Mammary epithelial cell (primary cell): ENCODE measurements at regions of chr15 and their contacts with region 1.

Region 1: DNA sequence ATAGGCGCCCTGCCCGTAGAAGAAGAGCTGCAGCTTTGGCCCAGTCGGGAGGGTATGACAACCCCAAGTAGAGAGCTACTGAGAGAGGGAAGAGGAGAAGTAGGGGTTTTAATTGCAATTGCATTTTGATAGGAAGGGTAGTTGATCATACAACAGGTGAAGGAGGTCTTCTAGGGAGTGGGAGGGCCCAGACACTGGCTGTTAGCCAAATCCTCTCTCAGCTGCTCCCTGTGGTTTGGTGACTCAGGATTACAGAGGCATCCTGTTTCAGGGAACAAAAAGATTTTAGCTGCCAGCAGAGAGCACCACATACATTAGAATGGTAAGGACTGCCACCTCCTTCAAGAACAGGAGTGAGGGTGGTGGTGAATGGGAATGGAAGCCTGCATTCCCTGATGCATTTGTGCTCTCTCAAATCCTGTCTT is 408.9 kb upstream of the THBS1 start:
- DNase-seq: peak; percentile 97
- H3K4me3 ChIP-seq: no peak overlapping the region
- H3K27ac ChIP-seq: peak overlapping the region; percentile 95
- H3K4me1 ChIP-seq: peaks cover 33% of the 10 kb centered on the region
- H3K27me3 ChIP-seq: no peaks in the 10 kb centered on the region
- CTCF ChIP-seq: peak; percentile 37 to 67

Region 2: DNA sequence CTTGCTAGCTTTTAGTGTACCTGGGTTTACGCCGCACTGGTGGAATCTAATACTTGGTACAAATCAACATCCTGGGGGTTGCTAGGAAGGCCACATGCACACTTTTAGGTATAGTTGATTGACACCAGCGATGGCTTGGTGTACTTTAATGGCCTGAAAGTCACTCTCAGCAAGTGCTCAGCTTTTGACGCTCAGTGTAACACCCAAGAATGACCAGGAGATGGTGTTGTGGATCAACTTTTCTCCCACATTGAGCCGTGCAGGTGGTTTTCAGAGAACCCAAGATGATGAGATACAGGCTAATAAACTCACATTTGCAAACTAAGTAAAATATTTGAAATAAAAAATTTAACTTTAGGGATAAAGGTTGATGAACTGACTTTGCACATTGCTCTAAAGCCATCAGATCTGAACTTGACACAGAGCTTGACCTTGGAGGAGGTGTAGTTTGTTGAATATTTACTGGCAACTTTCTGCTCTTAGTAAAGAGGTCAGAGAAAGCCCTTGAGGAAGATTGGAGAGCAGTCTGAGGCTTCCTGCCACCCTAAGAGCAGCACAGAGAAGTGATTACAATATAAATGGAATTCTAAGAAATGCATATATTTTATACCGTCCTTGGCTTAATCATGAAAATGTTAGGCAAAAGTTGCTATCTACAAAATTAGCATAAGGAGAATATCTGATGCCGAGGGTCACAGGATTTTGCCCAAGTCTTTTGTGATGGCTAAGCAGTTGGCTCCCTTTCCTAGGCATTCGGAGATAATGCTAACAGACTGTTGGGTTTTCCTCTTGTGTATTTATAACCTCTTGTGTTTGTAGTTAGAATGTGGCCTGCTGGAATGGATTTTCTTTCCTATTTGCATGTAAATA is 463.9 kb before region 1 on chr15:
- CTCF ChIA-PET with region 1: no interaction called
- dilution Hi-C with region 1: no loop called
- in situ Hi-C with region 1: loop called in 1 of 2 experiments (anchors 5 kb)
- intact Hi-C with region 1: loop called (anchors 1 kb)
- DNase-seq: peak; percentile 52
- H3K4me3 ChIP-seq: no peak overlapping the region
- H3K27ac ChIP-seq: no peak overlapping the region
- H3K4me1 ChIP-seq: no peaks in the 10 kb centered on the region
- H3K27me3 ChIP-seq: no peaks in the 10 kb centered on the region
- CTCF ChIP-seq: peak; percentile 74 to 78

Region 3: GRCh38 chr15:39195988-39196486 is 24.1 kb after region 1 on chr15:
- CTCF ChIA-PET with region 1: interaction called, 6 read pairs
- dilution Hi-C with region 1: no loop called
- in situ Hi-C with region 1: no loop called
- intact Hi-C with region 1: loop called (anchors 1 kb)
- DNase-seq: peak; percentile 100
- H3K4me3 ChIP-seq: no peak overlapping the region
- H3K27ac ChIP-seq: peak overlapping the region; percentile 90
- H3K4me1 ChIP-seq: peaks cover 81% of the 10 kb centered on the region
- H3K27me3 ChIP-seq: no peaks in the 10 kb centered on the region
- CTCF ChIP-seq: no peak

Region 4: GRCh38 chr15:39219608-39220007 is 47.7 kb after region 1 on chr15:
- CTCF ChIA-PET with region 1: no interaction called
- dilution Hi-C with region 1: no loop called
- in situ Hi-C with region 1: no loop called
- intact Hi-C with region 1: no loop called
- DNase-seq: no peak
- H3K4me3 ChIP-seq: no peak overlapping the region
- H3K27ac ChIP-seq: no peak overlapping the region
- H3K4me1 ChIP-seq: no peaks in the 10 kb centered on the region
- H3K27me3 ChIP-seq: no peaks in the 10 kb centered on the region
- CTCF ChIP-seq: no peak

Region 5: GRCh38 chr15:39331253-39331983 is 159.5 kb after region 1 on chr15:
- CTCF ChIA-PET with region 1: no interaction called
- dilution Hi-C with region 1: no loop called
- in situ Hi-C with region 1: no loop called
- intact Hi-C with region 1: loop called (anchors 1 kb)
- DNase-seq: peak; percentile 80
- H3K4me3 ChIP-seq: no peak overlapping the region
- H3K27ac ChIP-seq: no peak overlapping the region
- H3K4me1 ChIP-seq: peaks cover 25% of the 10 kb centered on the region
- H3K27me3 ChIP-seq: no peaks in the 10 kb centered on the region
- CTCF ChIP-seq: no peak

Region 6: DNA sequence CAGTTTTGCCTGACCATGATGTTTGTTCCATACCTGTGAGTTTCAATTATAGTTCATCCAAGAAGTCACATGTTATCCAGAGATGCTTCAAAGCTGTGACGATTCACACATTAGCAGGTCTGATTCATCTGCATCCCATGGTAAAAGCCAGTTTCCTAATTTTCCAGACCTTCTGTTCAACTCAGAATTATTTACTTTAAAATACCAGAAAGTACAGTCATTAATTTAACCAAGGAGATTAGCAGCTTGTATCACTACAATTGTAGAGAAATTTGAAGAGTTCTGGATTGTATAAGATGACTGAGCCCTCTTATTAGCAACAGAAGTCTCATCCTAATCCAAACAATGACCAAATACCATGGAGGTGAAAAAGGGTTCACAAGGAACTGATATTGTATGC is 332.9 kb after region 1 on chr15:
- CTCF ChIA-PET with region 1: no interaction called
- dilution Hi-C with region 1: no loop called
- in situ Hi-C with region 1: no loop called
- intact Hi-C with region 1: loop called (anchors 5 kb)
- DNase-seq: peak; percentile 80
- H3K4me3 ChIP-seq: no peak overlapping the region
- H3K27ac ChIP-seq: no peak overlapping the region
- H3K4me1 ChIP-seq: peaks cover 24% of the 10 kb centered on the region
- H3K27me3 ChIP-seq: no peaks in the 10 kb centered on the region
- CTCF ChIP-seq: no peak

Region 7: GRCh38 chr15:39874890-39875549 is 703.1 kb after region 1 on chr15:
- CTCF ChIA-PET with region 1: no interaction called
- dilution Hi-C with region 1: no loop called
- in situ Hi-C with region 1: no loop called
- intact Hi-C with region 1: loop called (anchors 5 kb)
- DNase-seq: peak; percentile 36
- H3K4me3 ChIP-seq: no peak overlapping the region
- H3K27ac ChIP-seq: no peak overlapping the region
- H3K4me1 ChIP-seq: peaks cover 11% of the 10 kb centered on the region
- H3K27me3 ChIP-seq: no peaks in the 10 kb centered on the region
- CTCF ChIP-seq: peak; percentile 61 to 70